ENCODE measurements at regions of chr4 and their contacts with region 1.

Region 1: DNA sequence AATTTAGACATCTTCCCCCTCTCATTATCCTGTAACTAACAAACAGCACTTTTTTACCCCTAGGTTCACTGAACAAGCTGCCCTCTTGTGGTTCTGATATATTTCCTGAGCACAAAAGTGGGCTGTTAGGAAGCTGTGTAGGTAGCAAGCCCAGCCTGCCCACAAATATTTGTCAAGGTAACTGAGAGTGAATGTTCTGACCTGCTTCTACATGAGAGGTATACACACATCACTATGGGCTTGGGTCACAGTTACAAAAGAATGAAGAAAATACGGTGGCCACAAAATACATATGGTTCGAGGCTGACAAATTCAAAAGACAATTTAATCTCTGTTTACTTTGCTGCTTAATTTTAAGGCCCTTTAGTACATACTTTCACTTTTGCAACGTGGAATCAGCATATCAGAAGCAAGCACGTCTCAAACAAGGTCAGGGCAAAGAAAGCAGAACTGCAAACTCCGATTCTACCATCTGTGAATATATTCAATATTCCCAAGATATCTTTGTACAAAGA is 78.7 kb downstream of the RBM47 start:
- DNase-seq: peak; percentile 46
- ATAC-seq: peak; percentile 76
- H3K4me3 Mint-ChIP-seq: peak overlapping the region; percentile 59
- H3K27ac Mint-ChIP-seq: peak overlapping the region; percentile 69
- H3K4me1 Mint-ChIP-seq: peaks cover 21% of the 10 kb centered on the region
- H3K27me3 Mint-ChIP-seq: no peaks in the 10 kb centered on the region

Region 2: GRCh38 chr4:40525811-40526598 is 25.0 kb before region 1 on chr4:
- CTCF ChIA-PET with region 1: no interaction called
- DNase-seq: no peak
- ATAC-seq: no peak
- H3K4me3 Mint-ChIP-seq: no peak overlapping the region
- H3K27ac Mint-ChIP-seq: no peak overlapping the region
- H3K4me1 Mint-ChIP-seq: no peaks in the 10 kb centered on the region
- H3K27me3 Mint-ChIP-seq: no peaks in the 10 kb centered on the region

Region 3: GRCh38 chr4:40719008-40719623 is 168.1 kb after region 1 on chr4:
- CTCF ChIA-PET with region 1: interaction called, 10 read pairs
- DNase-seq: no peak
- ATAC-seq: peak; percentile 70
- H3K4me3 Mint-ChIP-seq: no peak overlapping the region
- H3K27ac Mint-ChIP-seq: no peak overlapping the region
- H3K4me1 Mint-ChIP-seq: peaks cover 21% of the 10 kb centered on the region
- H3K27me3 Mint-ChIP-seq: peaks cover 4% of the 10 kb centered on the region

Region 4: DNA sequence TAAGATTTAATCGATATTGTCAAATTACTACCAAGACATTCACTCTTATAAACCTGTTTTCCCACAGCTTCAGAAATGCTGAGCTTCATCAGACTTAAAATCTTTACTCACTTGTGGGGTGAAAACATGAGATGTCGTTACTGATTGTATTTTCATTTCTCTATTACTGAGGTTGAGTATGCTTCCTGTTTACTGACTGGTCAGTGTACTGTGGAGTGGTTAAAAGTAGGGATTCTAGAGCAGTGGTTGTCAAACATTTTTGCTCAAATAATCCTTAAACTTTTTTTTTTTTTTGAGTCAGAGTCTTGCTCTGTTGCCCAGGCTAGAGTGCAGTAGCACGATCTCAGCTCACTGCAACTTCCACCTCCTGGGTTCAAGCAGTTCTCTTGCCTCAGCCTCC is 249.1 kb after region 1 on chr4:
- CTCF ChIA-PET with region 1: no interaction called
- DNase-seq: no peak
- ATAC-seq: no peak
- H3K4me3 Mint-ChIP-seq: no peak overlapping the region
- H3K27ac Mint-ChIP-seq: no peak overlapping the region
- H3K4me1 Mint-ChIP-seq: peaks cover 3% of the 10 kb centered on the region
- H3K27me3 Mint-ChIP-seq: peaks cover 9% of the 10 kb centered on the region

Measured in activated CD8-positive, alpha-beta memory T cell treated with anti-CD3 and anti-CD28 coated beads, Interleukin-2, amount 10 ng/mL, durations not matched to agents 7 days and 5 days (primary cell).